Ovary (tissue), 10 donors: ENCODE measurements at regions of chr7 and their contacts with region 1.

Region 1: GRCh38 chr7:39517240-39517639 is 49.0 kb upstream of the YAE1 start:
- DNase-seq: no peak
- H3K4me3 ChIP-seq: no peak overlapping the region
- H3K27ac ChIP-seq: no peak overlapping the region
- H3K4me1 ChIP-seq: no peaks in the 10 kb centered on the region
- H3K27me3 ChIP-seq: no peaks in the 10 kb centered on the region
- CTCF ChIP-seq: no peak
- EP300 ChIP-seq: no peak
- POLR2A ChIP-seq: no peak

Region 2: GRCh38 chr7:38398725-38399321 is 1118.4 kb before region 1 on chr7:
- intact Hi-C with region 1: loop called in 1 of 4 experiments (anchors 5 kb)
- DNase-seq: peak in 4 of 5 donors; percentile 31 to 58 (median 40)
- H3K4me3 ChIP-seq: no peak overlapping the region
- H3K27ac ChIP-seq: no peak overlapping the region
- H3K4me1 ChIP-seq: no peaks in the 10 kb centered on the region
- H3K27me3 ChIP-seq: no peaks in the 10 kb centered on the region
- CTCF ChIP-seq: peak; percentile 19 to 53 (median 40)
- EP300 ChIP-seq: no peak
- POLR2A ChIP-seq: no peak

Region 3: GRCh38 chr7:41472427-41473125 is 1955.3 kb after region 1 on chr7:
- intact Hi-C with region 1: no loop called
- DNase-seq: no peak
- H3K4me3 ChIP-seq: no peak overlapping the region
- H3K27ac ChIP-seq: no peak overlapping the region
- H3K4me1 ChIP-seq: peaks cover 5% of the 10 kb centered on the region
- H3K27me3 ChIP-seq: no peaks in the 10 kb centered on the region
- CTCF ChIP-seq: no peak
- EP300 ChIP-seq: no peak
- POLR2A ChIP-seq: no peak